Pancreas (tissue), 10 donors: ENCODE measurements at regions of chr15 and their contacts with region 1.

Region 1: DNA sequence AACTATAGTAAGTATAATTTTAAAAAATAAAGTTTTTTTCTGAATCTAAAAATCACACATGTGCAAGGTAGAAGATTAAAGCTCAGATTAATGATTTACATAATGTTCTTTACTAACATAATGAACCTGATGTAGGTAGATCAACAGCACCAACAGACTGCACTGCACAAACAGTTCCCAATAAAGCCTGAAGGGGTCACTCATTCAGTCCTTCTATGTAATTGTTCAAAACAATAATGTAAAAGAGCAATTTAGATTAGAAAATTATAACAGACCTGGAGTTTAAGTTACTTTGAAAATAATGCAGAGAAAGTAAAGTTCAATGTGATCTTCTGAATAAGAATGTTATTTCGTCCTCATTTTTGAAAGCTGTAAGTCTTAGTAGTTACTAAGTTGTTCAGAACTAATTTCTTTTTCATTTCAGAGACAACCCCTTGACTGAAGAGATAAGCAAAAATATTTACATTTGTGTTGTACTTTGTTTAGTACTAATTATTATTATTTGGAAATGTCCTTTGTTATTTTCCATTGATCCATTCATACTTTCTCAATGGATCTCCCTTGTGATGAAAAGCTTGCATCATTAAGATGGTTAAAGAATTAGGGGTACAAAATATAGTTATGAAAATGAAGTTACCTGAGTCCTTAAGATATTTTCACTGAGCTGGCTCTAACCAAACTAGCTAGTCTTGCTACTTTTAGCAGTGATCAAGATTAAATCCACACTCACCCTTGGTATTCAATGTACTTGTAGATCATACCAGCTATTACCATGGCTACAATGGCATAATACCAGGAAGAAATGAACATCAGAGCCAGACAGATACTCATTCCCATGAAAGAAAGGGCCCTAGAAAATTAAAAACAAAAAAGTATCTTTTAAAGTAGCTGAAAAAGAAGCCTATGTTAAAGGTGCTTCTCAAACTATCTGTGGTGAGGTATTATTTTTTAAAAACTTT is 16.8 kb downstream of the EMC4 start:
- DNase-seq: peak in 1 of 6 donors; percentile 17
- ATAC-seq: peak in 3 of 4 donors; percentile 77 to 88 (median 84)
- H3K4me3 ChIP-seq: no peak overlapping the region
- H3K27ac ChIP-seq: no peak overlapping the region
- H3K4me1 ChIP-seq: no peaks in the 10 kb centered on the region
- H3K27me3 ChIP-seq: no peaks in the 10 kb centered on the region
- CTCF ChIP-seq: peak; percentile 40 to 78 (median 74)

Region 2: DNA sequence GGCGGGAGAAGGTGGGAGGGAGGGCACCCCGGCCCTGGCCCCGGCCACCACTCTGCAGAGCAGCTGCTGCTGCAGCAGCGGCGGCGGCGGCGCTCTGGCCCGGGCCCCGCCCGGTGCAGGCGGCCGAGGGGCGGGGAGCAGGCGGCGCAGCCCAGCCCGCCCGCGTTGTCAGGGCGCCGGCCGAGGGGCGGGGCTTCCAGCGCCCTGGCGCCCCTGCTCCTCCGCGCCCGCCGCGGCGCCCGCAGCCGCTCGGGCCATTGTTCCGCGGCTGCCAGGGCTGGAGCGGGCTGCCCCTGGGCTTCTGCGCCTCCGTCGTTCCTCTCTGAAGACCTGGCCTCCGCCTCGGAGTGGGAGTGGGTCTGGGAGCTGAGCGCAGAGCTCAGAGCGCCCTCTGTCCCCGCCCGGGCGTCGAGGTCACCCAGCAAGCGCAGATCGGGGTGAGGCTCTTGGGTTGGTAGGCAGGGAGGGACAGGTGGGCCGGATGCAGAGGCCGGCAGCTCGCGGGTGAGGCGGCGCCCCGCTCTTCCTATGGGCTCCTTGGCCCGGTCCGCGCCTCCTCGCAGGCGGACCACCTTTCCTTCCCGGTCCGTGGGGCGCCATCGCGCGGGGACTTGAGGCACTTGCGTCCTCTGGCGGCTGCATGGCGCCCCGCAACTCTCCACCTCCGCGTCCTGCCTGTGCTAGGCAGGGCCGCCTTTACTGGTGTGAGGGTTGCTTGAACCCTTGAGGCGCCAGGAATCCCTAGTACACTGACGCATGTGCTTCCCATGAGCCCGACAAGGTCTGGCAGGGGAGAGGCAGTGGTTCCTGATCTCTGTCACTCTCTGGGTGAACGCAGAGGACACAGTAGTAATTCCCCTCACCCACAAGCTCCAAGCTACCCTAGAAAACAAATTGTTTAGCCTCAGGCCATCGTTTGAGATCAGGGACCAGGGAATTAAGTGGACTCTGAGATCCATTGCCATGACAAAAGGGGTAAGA is 125.7 kb after region 1 on chr15 and contains the start of gene LPCAT4:
- intact Hi-C with region 1: loop called in 1 of 3 experiments (anchors 10 kb)
- DNase-seq: peak; percentile 76 to 94 (median 86)
- ATAC-seq: peak; percentile 89 to 95 (median 94)
- H3K4me3 ChIP-seq: peak within 1 kb of the TSS; percentile 59 to 91 (median 84)
- H3K27ac ChIP-seq: peak within 1 kb of the TSS; percentile 92 to 99 (median 94)
- H3K4me1 ChIP-seq: peaks cover 0 to 9% (median 0%) of the 10 kb centered on the region in 3 donors
- H3K27me3 ChIP-seq: no peaks in the 10 kb centered on the region
- CTCF ChIP-seq: peak; percentile 79 to 94 (median 86)
- total RNA-seq, gene LPCAT4: 9.7 to 23.5 (median 13.7) TPM

Region 3: GRCh38 chr15:34594361-34594760 is 352.7 kb after region 1 on chr15:
- intact Hi-C with region 1: loop called in 1 of 3 experiments (anchors 10 kb)
- DNase-seq: no peak
- ATAC-seq: no peak
- H3K4me3 ChIP-seq: no peak overlapping the region
- H3K27ac ChIP-seq: no peak overlapping the region
- H3K4me1 ChIP-seq: no peaks in the 10 kb centered on the region
- H3K27me3 ChIP-seq: no peaks in the 10 kb centered on the region
- CTCF ChIP-seq: no peak